Ovary (tissue), 10 donors: ENCODE measurements at regions of chr2 and their contacts with region 1.

Region 1: GRCh38 chr2:235534678-235535422 is 41.0 kb downstream of the AGAP1 start:
- DNase-seq: peak in 1 of 5 donors; percentile 25
- H3K4me3 ChIP-seq: no peak overlapping the region
- H3K27ac ChIP-seq: no peak overlapping the region
- H3K4me1 ChIP-seq: peaks cover 2% of the 10 kb centered on the region
- H3K27me3 ChIP-seq: no peaks in the 10 kb centered on the region
- CTCF ChIP-seq: no peak
- EP300 ChIP-seq: no peak
- POLR2A ChIP-seq: no peak

Region 2: GRCh38 chr2:235170536-235171521 is 364.0 kb before region 1 on chr2:
- intact Hi-C with region 1: loop called in 1 of 4 experiments (anchors 5 kb)
- DNase-seq: no peak
- H3K4me3 ChIP-seq: no peak overlapping the region
- H3K27ac ChIP-seq: no peak overlapping the region
- H3K4me1 ChIP-seq: no peaks in the 10 kb centered on the region
- H3K27me3 ChIP-seq: no peaks in the 10 kb centered on the region
- CTCF ChIP-seq: no peak
- EP300 ChIP-seq: no peak
- POLR2A ChIP-seq: no peak

Region 3: GRCh38 chr2:236040600-236041320 is 505.9 kb after region 1 on chr2:
- intact Hi-C with region 1: no loop called
- DNase-seq: no peak
- H3K4me3 ChIP-seq: no peak overlapping the region
- H3K27ac ChIP-seq: no peak overlapping the region
- H3K4me1 ChIP-seq: no peaks in the 10 kb centered on the region
- H3K27me3 ChIP-seq: no peaks in the 10 kb centered on the region
- CTCF ChIP-seq: no peak
- EP300 ChIP-seq: no peak
- POLR2A ChIP-seq: no peak